ENCODE measurements at regions of chr7 and their contacts with region 1.

Region 1: GRCh38 chr7:22672846-22673652 is 54.0 kb upstream of the IL6 start:
- DNase-seq: no peak
- ATAC-seq: peak; percentile 57
- H3K4me3 Mint-ChIP-seq: peak overlapping the region; percentile 39
- H3K27ac Mint-ChIP-seq: peak overlapping the region; percentile 89
- H3K4me1 Mint-ChIP-seq: peaks cover 93% of the 10 kb centered on the region
- H3K27me3 Mint-ChIP-seq: no peaks in the 10 kb centered on the region
- CTCF ChIP-seq: no peak

Region 2: DNA sequence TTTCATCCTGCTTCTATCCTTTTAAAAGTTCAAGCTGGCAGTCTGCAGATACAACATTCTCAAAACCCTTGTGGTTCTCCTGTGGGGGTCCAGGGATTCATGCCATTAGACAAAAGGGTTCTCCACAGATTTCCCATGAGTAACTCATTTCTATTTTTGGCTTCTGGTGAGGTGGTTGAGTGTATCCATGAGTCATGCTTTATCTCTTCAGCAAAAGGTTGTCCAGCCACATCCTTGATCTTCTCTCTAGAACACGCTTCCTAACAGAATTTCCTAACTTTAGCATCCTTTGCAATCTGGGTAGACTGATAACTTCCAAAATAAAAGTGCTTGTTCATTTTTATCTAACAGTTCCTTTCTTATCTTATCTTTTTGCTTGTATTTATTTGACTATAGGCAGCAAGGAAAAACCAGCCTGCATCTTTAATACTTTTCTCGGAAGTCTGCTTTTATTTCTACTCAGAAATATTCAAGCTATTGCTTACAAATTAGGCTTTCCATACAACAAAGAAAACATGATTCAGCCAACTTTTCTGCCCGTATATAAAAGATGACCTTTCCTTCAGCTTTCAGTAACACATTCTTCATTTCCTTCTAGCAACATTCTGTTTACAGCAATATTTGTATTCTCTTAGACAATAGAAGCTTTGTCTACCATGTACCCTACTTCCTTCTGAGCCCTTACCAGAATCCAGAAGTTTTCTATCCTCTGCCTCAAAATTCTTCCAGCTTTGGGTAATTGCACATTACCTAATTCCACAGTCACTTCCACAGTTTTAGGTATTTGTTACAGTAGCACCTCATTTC is 25.4 kb before region 1 on chr7:
- CTCF ChIA-PET with region 1: no interaction called
- POLR2A ChIA-PET with region 1: no interaction called
- intact Hi-C with region 1: no loop called
- DNase-seq: no peak
- ATAC-seq: no peak
- H3K4me3 Mint-ChIP-seq: no peak overlapping the region
- H3K27ac Mint-ChIP-seq: peak overlapping the region; percentile 35
- H3K4me1 Mint-ChIP-seq: peaks cover 10% of the 10 kb centered on the region
- H3K27me3 Mint-ChIP-seq: no peaks in the 10 kb centered on the region
- CTCF ChIP-seq: no peak

Region 3: GRCh38 chr7:22712999-22713398 is 40.0 kb after region 1 on chr7:
- CTCF ChIA-PET with region 1: interaction called, 3 read pairs
- POLR2A ChIA-PET with region 1: interaction called, 25 read pairs
- intact Hi-C with region 1: loop called (anchors 2 kb)
- DNase-seq: no peak
- ATAC-seq: peak; percentile 85
- H3K4me3 Mint-ChIP-seq: peak overlapping the region; percentile 66
- H3K27ac Mint-ChIP-seq: peak overlapping the region; percentile 98
- H3K4me1 Mint-ChIP-seq: peaks cover 63% of the 10 kb centered on the region
- H3K27me3 Mint-ChIP-seq: no peaks in the 10 kb centered on the region
- CTCF ChIP-seq: no peak

Region 4: GRCh38 chr7:22992874-22993840 is 320.1 kb after region 1 on chr7:
- CTCF ChIA-PET with region 1: no interaction called
- POLR2A ChIA-PET with region 1: no interaction called
- intact Hi-C with region 1: no loop called
- DNase-seq: no peak
- ATAC-seq: no peak
- H3K4me3 Mint-ChIP-seq: no peak overlapping the region
- H3K27ac Mint-ChIP-seq: no peak overlapping the region
- H3K4me1 Mint-ChIP-seq: peaks cover 43% of the 10 kb centered on the region
- H3K27me3 Mint-ChIP-seq: no peaks in the 10 kb centered on the region
- CTCF ChIP-seq: no peak

Measured in activated B cell treated with CpG ODN at 0.5 μM for 24 hours (primary cell).